ENCODE measurements at regions of chr9 and their contacts with region 1.

Region 1: DNA sequence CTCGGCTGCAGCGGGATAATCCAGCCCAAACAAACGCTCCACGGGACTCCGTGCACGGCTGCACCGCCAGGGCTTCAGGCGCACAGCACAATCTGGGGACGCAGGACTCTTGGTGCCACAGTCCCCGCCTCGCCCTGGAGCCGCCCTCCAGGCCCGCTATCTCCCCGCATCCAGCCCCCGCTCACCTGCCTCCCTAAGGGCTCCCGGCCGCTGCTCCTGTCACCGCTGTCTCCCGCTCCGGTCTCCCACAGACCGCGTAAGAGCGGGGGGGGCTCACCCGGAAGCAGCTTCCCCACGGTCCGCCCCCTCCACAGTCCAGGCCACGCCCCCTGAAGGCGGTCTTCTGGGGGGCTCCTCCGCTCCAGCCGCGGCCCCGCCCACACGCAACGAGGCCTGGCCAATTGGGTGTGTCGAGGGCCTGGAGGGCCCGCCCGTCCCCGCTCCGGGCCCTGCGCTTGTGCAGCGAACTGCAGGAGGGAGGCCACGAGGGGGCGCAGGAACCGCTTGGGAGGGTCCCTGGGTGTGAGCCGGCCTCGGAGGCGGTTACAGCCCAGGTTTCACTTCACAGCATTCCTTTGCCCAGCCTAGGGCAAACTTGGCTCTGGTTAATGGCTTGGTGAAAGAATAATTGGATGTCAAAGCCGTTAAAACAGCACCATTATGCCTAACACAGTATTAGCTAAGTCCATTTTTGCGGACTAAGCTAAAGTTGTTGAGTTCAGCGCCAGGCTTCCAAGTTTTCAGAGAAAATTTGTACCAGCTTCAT is at the start of gene ALAD:
- DNase-seq: peak; percentile 93 to 100
- H3K4me3 ChIP-seq: peak within 1 kb of the TSS; percentile 70 to 95 (median 90)
- H3K27ac ChIP-seq: no peak within 1 kb of the TSS
- H3K4me1 ChIP-seq: peaks cover 0 to 2% (median 0%) of the 10 kb centered on the region in 4 experiments; a peak in 2 of 7 replicates
- H3K27me3 ChIP-seq: no peaks in the 10 kb centered on the region
- CTCF ChIP-seq: peak; percentile 81 to 93 (median 92)
- EP300 ChIP-seq: peak in 1 of 2 experiments; percentile 64; a peak in 1 of 3 replicates
- POLR2A ChIP-seq: no peak
- RAD21 ChIP-seq: peak; percentile 70 to 79
- total RNA-seq, gene ALAD: 13.0 and 15.3 TPM in 2 replicates

Region 2: GRCh38 chr9:113309204-113309813 is 91.9 kb before region 1 on chr9:
- CTCF ChIA-PET with region 1: interaction called, 30 read pairs
- POLR2A ChIA-PET with region 1: no interaction called
- DNase-seq: no peak
- H3K4me3 ChIP-seq: no peak overlapping the region
- H3K27ac ChIP-seq: no peak overlapping the region
- H3K4me1 ChIP-seq: no peaks in the 10 kb centered on the region
- H3K27me3 ChIP-seq: no peaks in the 10 kb centered on the region; a peak in 1 of 7 replicates
- CTCF ChIP-seq: peak in 2 of 3 experiments; percentile 39 to 43; a peak in 2 of 4 replicates
- EP300 ChIP-seq: no peak
- POLR2A ChIP-seq: no peak
- RAD21 ChIP-seq: peak; percentile 79 to 80

Region 3: DNA sequence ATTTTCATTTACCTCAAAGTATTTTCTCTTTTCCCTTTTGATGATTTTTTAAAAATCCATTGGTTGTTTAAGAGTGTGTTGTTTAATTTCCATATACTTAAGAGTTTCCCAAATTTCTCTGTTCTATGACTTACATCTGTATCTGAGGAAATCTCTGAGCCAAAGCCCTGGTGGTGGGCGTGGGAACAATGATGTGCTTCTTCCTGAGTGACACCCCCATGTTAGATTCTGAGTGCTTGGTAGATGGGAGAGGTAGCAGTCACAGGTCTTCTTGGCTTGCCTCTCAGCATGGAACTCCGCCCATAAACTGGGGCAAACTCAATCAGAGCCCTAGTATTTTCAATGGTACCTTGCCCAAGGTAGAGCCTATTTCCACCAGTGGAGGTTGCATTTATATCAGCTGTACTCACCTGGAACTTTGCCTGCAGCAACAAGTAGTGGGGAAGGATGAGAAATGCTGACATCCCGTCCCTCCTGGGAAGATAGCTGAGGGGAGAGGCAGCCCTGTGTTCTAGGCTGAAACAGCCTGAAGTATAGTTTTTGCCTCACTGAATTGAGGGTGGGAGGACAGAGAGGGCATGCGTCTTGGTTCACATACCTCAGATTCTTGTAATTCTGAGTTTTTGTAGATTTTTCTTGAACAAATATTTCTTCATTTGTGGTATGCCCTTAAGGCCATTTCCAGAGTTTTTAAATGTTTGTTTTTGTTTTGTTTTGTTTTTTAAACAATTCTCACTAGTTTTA is 35.7 kb after region 1 on chr9:
- CTCF ChIA-PET with region 1: no interaction called
- POLR2A ChIA-PET with region 1: no interaction called
- DNase-seq: no peak
- H3K4me3 ChIP-seq: no peak overlapping the region
- H3K27ac ChIP-seq: no peak overlapping the region
- H3K4me1 ChIP-seq: no peaks in the 10 kb centered on the region
- H3K27me3 ChIP-seq: no peaks in the 10 kb centered on the region
- CTCF ChIP-seq: no peak
- EP300 ChIP-seq: no peak
- POLR2A ChIP-seq: no peak
- RAD21 ChIP-seq: no peak

Region 4: DNA sequence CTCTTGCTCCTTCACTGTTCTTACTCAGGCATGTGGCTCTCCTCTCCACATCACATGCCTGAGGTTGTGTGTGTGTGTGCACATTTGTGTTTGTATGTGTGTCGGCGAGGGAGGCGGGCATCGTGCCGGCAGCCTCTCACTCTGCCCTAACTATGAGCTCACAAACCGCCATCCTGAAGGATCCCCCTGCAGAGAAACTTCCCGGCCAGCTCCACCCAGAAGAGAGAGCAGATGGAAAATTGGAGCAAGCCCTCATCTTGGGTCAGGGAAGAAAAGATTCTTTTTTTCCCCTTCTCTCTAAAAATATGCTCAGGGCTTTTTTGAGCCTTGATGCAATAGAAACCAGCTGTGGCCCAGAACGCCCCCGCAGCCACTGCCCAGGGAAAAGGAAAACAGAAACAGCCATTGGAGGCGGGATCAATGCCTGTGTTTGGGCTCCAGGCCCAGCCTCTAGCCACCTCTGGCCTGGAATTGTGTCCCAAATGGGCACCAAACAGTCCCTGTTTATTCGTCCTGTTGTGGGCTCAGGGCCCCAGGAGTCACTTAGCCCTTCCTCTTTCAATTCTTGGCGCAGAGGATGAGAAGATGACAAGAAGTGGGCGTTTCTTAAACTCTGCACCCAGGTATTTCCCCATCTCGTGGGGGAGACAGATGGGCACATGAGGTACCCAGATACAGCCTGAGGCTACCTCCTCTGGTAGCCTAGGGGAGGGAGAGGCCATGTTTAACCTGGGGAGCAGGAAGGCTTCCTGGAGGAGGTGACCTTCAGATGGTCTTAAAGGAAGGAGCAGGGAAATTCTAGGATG is 213.8 kb after region 1 on chr9:
- CTCF ChIA-PET with region 1: no interaction called
- POLR2A ChIA-PET with region 1: no interaction called
- DNase-seq: no peak
- H3K4me3 ChIP-seq: no peak overlapping the region
- H3K27ac ChIP-seq: no peak overlapping the region
- H3K4me1 ChIP-seq: peaks cover 8 to 18% (median 10%) of the 10 kb centered on the region in 4 experiments
- H3K27me3 ChIP-seq: no peaks in the 10 kb centered on the region; a peak in 2 of 7 replicates
- CTCF ChIP-seq: no peak
- EP300 ChIP-seq: no peak
- POLR2A ChIP-seq: no peak
- RAD21 ChIP-seq: no peak

Region 5: DNA sequence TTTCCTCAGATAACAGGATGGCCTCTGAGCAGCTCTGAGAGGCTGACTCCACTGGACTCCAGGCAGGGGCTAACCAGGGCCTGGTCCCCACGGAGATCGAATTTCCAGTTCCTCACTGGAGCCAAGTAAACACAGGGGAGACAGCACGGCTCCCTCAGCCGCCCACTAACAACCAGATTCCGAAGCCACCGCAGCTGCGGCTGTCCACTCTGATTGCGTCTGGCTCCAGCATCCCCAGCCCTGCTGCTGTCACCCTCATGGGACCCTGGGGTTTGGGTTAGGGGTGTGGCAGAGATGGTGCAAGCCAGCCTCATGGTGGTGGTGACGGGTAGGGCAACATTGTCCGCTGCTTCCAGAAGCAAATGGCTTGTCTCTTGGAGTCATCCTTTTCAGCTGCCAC is 235.0 kb after region 1 on chr9:
- CTCF ChIA-PET with region 1: no interaction called
- POLR2A ChIA-PET with region 1: no interaction called
- DNase-seq: no peak
- H3K4me3 ChIP-seq: no peak overlapping the region
- H3K27ac ChIP-seq: no peak overlapping the region
- H3K4me1 ChIP-seq: peaks cover 0 to 6% (median 4%) of the 10 kb centered on the region in 4 experiments; a peak in 3 of 7 replicates
- H3K27me3 ChIP-seq: peaks cover 0 to 2% (median 0%) of the 10 kb centered on the region in 4 experiments; a peak in 1 of 7 replicates
- CTCF ChIP-seq: peak in 2 of 3 experiments; percentile 9 to 14; a peak in 2 of 4 replicates
- EP300 ChIP-seq: no peak
- POLR2A ChIP-seq: no peak
- RAD21 ChIP-seq: peak; percentile 12 to 29; a peak in 3 of 4 replicates